Activated naive CD4-positive, alpha-beta T cell treated with anti-CD3 and anti-CD28 coated beads for 36 hours (primary cell): ENCODE measurements at regions of chr1 and their contacts with region 1.

Region 1: GRCh38 chr1:101178688-101179491 is 57.9 kb upstream of the S1PR1 start:
- DNase-seq: peak; percentile 66
- H3K4me3 Mint-ChIP-seq: peak overlapping the region; percentile 63
- H3K27ac Mint-ChIP-seq: peak overlapping the region; percentile 100
- H3K4me1 Mint-ChIP-seq: peaks cover 82% of the 10 kb centered on the region
- H3K27me3 Mint-ChIP-seq: no peaks in the 10 kb centered on the region

Region 2: DNA sequence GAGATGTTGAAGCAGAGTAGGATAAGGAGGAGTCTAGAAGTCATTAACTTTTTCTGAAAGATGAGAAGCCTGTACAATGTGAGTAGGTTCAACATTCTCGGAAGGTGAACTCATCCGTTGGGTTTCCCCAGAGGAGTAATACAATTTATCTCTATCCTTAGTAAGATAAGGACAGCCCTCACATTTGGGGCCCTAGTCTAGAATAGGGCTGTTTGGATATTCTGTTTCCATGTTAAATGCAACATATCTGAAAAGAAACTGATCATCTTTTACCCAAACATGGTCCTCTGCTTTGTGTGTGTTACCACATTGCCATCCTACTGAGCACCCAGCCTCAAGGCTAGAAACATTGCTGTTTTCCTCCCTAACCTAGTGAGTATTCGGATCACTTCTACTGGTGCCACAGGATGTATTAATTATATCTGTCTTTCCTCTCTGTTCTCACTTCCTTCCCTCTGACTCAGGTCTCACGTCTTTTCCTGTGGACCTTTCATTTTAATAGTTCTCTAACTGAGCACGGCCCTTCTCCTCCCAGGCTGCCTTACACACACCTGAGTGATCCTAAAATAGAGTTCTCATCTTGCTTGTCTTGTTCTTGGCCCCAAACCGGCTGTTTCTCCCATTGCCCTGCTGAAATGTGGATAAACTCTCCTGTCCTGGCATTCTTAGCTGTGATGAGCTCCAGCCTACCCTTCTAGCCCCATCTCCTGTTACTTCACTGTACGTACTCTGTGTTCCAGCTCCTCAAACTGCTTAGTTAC is 734.9 kb before region 1 on chr1:
- CTCF ChIA-PET with region 1: no interaction called
- intact Hi-C with region 1: loop called (anchors 5 kb)
- DNase-seq: peak; percentile 53
- H3K4me3 Mint-ChIP-seq: peak overlapping the region; percentile 72
- H3K27ac Mint-ChIP-seq: peak overlapping the region; percentile 96
- H3K4me1 Mint-ChIP-seq: peaks cover 85% of the 10 kb centered on the region
- H3K27me3 Mint-ChIP-seq: no peaks in the 10 kb centered on the region

Region 3: GRCh38 chr1:100941098-100941527 is 237.8 kb before region 1 on chr1:
- CTCF ChIA-PET with region 1: no interaction called
- intact Hi-C with region 1: loop called (anchors 5 kb)
- DNase-seq: peak; percentile 58
- H3K4me3 Mint-ChIP-seq: peak overlapping the region; percentile 58
- H3K27ac Mint-ChIP-seq: peak overlapping the region; percentile 92
- H3K4me1 Mint-ChIP-seq: peaks cover 48% of the 10 kb centered on the region
- H3K27me3 Mint-ChIP-seq: peaks cover 2% of the 10 kb centered on the region

Region 4: GRCh38 chr1:101051688-101052638 is 126.9 kb before region 1 on chr1:
- CTCF ChIA-PET with region 1: no interaction called
- intact Hi-C with region 1: loop called (anchors 2 kb)
- DNase-seq: peak; percentile 64
- H3K4me3 Mint-ChIP-seq: no peak overlapping the region
- H3K27ac Mint-ChIP-seq: peak overlapping the region; percentile 48
- H3K4me1 Mint-ChIP-seq: peaks cover 17% of the 10 kb centered on the region
- H3K27me3 Mint-ChIP-seq: no peaks in the 10 kb centered on the region

Region 5: DNA sequence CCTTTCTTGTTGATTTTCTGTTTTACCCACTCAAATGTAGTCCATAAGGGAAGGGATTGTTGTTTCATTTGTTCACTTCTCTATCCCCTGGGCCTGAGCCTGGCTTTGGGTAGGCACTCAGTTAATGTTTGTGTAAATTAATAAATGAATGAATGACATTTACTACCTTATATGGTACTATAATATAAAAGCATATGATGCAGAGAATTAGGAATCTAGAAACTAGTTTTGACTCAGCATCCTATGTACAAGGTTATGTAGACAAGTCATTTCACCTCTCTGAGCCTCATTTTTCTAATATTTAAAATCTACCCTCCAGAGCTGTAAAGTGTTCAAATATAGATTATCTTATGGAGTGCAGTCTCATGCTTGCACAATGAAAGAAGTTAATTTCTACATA is 11.0 kb before region 1 on chr1:
- CTCF ChIA-PET with region 1: interaction called, 4 read pairs
- intact Hi-C with region 1: loop called (anchors 1 kb)
- DNase-seq: no peak
- H3K4me3 Mint-ChIP-seq: no peak overlapping the region
- H3K27ac Mint-ChIP-seq: peak overlapping the region; percentile 43
- H3K4me1 Mint-ChIP-seq: peaks cover 41% of the 10 kb centered on the region
- H3K27me3 Mint-ChIP-seq: no peaks in the 10 kb centered on the region

Region 6: GRCh38 chr1:101221945-101222429 is 43.1 kb after region 1 on chr1:
- CTCF ChIA-PET with region 1: no interaction called
- intact Hi-C with region 1: no loop called
- DNase-seq: no peak
- H3K4me3 Mint-ChIP-seq: peak overlapping the region; percentile 4
- H3K27ac Mint-ChIP-seq: peak overlapping the region; percentile 65
- H3K4me1 Mint-ChIP-seq: peaks cover 27% of the 10 kb centered on the region
- H3K27me3 Mint-ChIP-seq: no peaks in the 10 kb centered on the region

Region 7: GRCh38 chr1:101238681-101239094 is 59.8 kb after region 1 on chr1:
- CTCF ChIA-PET with region 1: interaction called, 27 read pairs
- intact Hi-C with region 1: loop called (anchors 1 kb)
- DNase-seq: peak; percentile 97
- H3K4me3 Mint-ChIP-seq: peak overlapping the region; percentile 99
- H3K27ac Mint-ChIP-seq: peak overlapping the region; percentile 99
- H3K4me1 Mint-ChIP-seq: peaks cover 44% of the 10 kb centered on the region
- H3K27me3 Mint-ChIP-seq: no peaks in the 10 kb centered on the region